ENCODE measurements at regions of chr1 and their contacts with region 1.

Region 1: DNA sequence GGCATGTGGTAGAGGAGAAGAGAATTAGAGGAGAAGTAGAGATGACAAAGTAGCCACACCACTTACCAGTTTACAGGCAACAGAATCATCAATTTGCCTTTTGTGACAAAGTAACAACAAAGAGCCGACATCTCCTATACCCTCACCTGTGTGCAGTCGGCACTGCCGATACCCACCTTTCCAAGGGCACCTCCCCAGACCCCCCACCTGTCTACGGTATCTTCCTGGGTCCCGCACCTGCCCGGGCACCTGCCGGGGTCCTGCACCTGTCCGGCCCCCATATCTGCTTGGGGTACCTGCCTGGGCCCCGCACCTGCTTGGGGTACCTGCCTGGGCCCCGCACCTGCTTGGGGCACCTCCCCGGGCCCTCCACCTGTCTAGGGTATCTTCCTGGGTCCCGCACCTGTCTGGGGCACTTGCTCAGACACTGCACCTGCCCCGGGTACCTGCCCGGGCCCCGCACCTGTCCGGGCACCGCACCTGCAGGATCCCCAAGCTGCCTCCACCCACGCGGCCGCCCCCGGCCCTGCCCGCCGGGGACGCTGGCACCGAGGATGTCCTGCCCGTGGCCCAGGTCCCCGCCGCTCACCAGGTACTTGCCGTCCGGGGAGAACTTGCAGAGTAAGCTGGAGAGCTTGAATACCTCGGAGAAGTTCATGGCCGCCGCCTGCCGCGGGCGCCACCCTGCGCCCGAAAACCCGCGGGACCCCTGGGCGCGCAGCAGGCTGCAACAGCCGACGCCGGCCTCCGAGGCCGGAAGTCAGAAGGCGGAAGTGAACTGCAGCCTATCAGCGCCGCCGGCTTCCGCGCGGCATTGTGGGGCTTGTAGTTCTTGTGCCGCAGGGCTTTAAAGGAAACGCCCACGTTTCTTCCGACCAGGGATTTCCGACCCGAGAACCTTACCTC is at the start of gene WRAP73:
- DNase-seq: peak; percentile 77
- total RNA-seq, gene WRAP73: 41.1 and 41.2 TPM in 2 replicates

Region 2: GRCh38 chr1:3530926-3531818 is 118.4 kb before region 1 on chr1:
- in situ Hi-C with region 1: loop called (anchors 25 kb)
- DNase-seq: peak; percentile 59

Measured in Caki2 (cell line).